Heart left ventricle (tissue), 16 donors: ENCODE measurements at regions of chr3 and their contacts with region 1.

Region 1: DNA sequence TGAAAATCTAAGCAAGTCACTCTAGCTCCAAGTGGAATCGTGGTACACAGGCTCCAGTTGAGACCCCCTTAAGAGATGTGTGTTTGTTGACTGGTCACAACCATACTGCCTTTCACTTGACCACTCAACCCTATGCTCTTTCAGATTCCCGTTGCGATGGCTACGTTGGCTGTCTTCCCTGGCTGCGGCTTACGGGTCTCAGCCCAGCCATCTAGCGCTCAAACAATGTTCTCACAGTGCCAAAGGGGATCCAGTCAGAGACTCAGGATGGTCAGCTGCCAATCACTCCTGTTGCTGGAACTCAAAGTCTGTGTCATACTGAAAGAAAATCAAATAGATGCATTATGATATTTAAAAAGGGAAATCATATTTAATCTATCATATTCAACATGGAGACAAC is 237.6 kb downstream of the ITPR1 start:
- DNase-seq: peak in 1 of 5 donors; percentile 49
- ATAC-seq: peak; percentile 47 to 72 (median 68)
- H3K4me3 ChIP-seq: no peak overlapping the region
- H3K27ac ChIP-seq: peak overlapping the region in 1 of 12 donors; percentile 10
- H3K4me1 ChIP-seq: peaks cover 0 to 42% (median 9%) of the 10 kb centered on the region in 12 donors
- H3K27me3 ChIP-seq: no peaks in the 10 kb centered on the region
- CTCF ChIP-seq: no peak
- POLR2A ChIP-seq: no peak

Region 2: GRCh38 chr3:4772171-4772804 is 41.6 kb after region 1 on chr3:
- intact Hi-C with region 1: loop called in 1 of 10 experiments (anchors 5 kb)
- DNase-seq: peak; percentile 82 to 92 (median 84)
- ATAC-seq: peak; percentile 86 to 91 (median 89)
- H3K4me3 ChIP-seq: peak overlapping the region in 1 of 12 donors; percentile 18
- H3K27ac ChIP-seq: peak overlapping the region; percentile 51 to 92 (median 81)
- H3K4me1 ChIP-seq: peaks cover 8 to 44% (median 32%) of the 10 kb centered on the region in 12 donors
- H3K27me3 ChIP-seq: no peaks in the 10 kb centered on the region
- CTCF ChIP-seq: no peak
- POLR2A ChIP-seq: no peak